Naive thymus-derived CD4-positive, alpha-beta T cell (primary cell): ENCODE measurements at regions of chr12 and their contacts with region 1.

Region 1: GRCh38 chr12:62123721-62124203 is 136.4 kb upstream of the USP15 start:
- DNase-seq: peak in 7 of 9 donors; percentile 8 to 49 (median 30)
- ATAC-seq: peak; percentile 77
- H3K4me3 ChIP-seq: no peak overlapping the region
- H3K4me3 Mint-ChIP-seq: no peak overlapping the region
- H3K27ac ChIP-seq: no peak overlapping the region
- H3K27ac Mint-ChIP-seq: peak overlapping the region in 1 of 9 donors; percentile 27
- H3K4me1 ChIP-seq: no peaks in the 10 kb centered on the region
- H3K4me1 Mint-ChIP-seq: peaks cover 0 to 6% (median 0%) of the 10 kb centered on the region in 7 donors
- H3K27me3 ChIP-seq: no peaks in the 10 kb centered on the region
- H3K27me3 Mint-ChIP-seq: peaks cover 0 to 17% (median 4%) of the 10 kb centered on the region in 5 donors

Region 2: DNA sequence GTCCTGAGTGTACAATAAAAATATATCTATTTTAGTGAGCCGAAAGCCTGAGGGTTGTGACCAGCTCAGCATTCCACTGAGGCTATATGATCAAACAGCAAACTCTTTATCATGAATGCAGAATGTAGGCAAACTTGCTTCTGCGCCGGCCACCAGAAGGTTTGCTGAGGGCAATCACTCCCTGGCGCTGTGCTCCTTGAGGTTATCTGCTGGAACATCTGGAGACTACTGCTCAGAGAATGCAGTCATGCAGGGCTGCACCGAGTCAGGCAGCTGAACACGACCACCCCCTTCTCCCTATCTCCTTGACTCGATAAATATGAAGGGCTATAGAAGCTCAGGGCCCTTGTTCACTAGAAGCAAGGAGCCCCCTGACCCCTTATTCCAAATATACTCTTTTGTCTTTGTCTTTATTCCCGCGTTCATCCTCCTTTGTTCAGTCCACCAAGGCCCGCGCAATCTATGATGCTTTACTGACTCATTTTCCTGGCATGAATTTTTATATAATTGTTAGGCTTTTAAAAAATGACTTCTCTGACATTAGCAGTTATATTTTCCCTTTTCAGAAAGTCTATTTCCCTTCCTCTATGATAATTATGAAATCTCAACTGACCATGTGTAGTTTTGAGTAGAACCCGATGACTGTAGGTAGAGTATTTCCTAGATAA is 1438.6 kb before region 1 on chr12:
- CTCF ChIA-PET with region 1: no interaction called
- POLR2A ChIA-PET with region 1: no interaction called
- intact Hi-C with region 1: loop called in 1 of 2 experiments (anchors 10 kb)
- DNase-seq: no peak
- ATAC-seq: no peak
- H3K4me3 ChIP-seq: no peak overlapping the region
- H3K4me3 Mint-ChIP-seq: no peak overlapping the region
- H3K27ac ChIP-seq: no peak overlapping the region
- H3K27ac Mint-ChIP-seq: no peak overlapping the region
- H3K4me1 ChIP-seq: no peaks in the 10 kb centered on the region
- H3K4me1 Mint-ChIP-seq: no peaks in the 10 kb centered on the region
- H3K27me3 ChIP-seq: no peaks in the 10 kb centered on the region
- H3K27me3 Mint-ChIP-seq: peaks cover 0 to 1% (median 0%) of the 10 kb centered on the region in 5 donors

Region 3: GRCh38 chr12:62135553-62136200 is 11.9 kb after region 1 on chr12:
- CTCF ChIA-PET with region 1: no interaction called
- POLR2A ChIA-PET with region 1: no interaction called
- intact Hi-C with region 1: no loop called
- DNase-seq: no peak
- ATAC-seq: no peak
- H3K4me3 ChIP-seq: no peak overlapping the region
- H3K4me3 Mint-ChIP-seq: no peak overlapping the region
- H3K27ac ChIP-seq: no peak overlapping the region
- H3K27ac Mint-ChIP-seq: no peak overlapping the region
- H3K4me1 ChIP-seq: no peaks in the 10 kb centered on the region
- H3K4me1 Mint-ChIP-seq: no peaks in the 10 kb centered on the region
- H3K27me3 ChIP-seq: no peaks in the 10 kb centered on the region
- H3K27me3 Mint-ChIP-seq: peaks cover 0 to 6% (median 0%) of the 10 kb centered on the region in 5 donors

Region 4: GRCh38 chr12:62273724-62274380 is 150.1 kb after region 1 on chr12:
- CTCF ChIA-PET with region 1: no interaction called
- POLR2A ChIA-PET with region 1: no interaction called
- intact Hi-C with region 1: no loop called
- DNase-seq: no peak
- ATAC-seq: no peak
- H3K4me3 ChIP-seq: no peak overlapping the region
- H3K4me3 Mint-ChIP-seq: peak overlapping the region; percentile 17 to 79 (median 54)
- H3K27ac ChIP-seq: peak overlapping the region; percentile 31
- H3K27ac Mint-ChIP-seq: peak overlapping the region in 7 of 9 donors; percentile 15 to 59 (median 51)
- H3K4me1 ChIP-seq: peaks cover 36 to 41% of the 10 kb centered on the region in 2 donors
- H3K4me1 Mint-ChIP-seq: peaks cover 62 to 89% (median 85%) of the 10 kb centered on the region in 7 donors
- H3K27me3 ChIP-seq: no peaks in the 10 kb centered on the region
- H3K27me3 Mint-ChIP-seq: no peaks in the 10 kb centered on the region

Region 5: GRCh38 chr12:62328296-62328921 is 204.6 kb after region 1 on chr12:
- CTCF ChIA-PET with region 1: no interaction called
- POLR2A ChIA-PET with region 1: no interaction called
- intact Hi-C with region 1: no loop called
- DNase-seq: no peak
- ATAC-seq: no peak
- H3K4me3 ChIP-seq: no peak overlapping the region
- H3K4me3 Mint-ChIP-seq: no peak overlapping the region
- H3K27ac ChIP-seq: no peak overlapping the region
- H3K27ac Mint-ChIP-seq: peak overlapping the region in 3 of 9 donors; percentile 1 to 56 (median 43)
- H3K4me1 ChIP-seq: no peaks in the 10 kb centered on the region
- H3K4me1 Mint-ChIP-seq: peaks cover 7 to 49% (median 29%) of the 10 kb centered on the region in 7 donors
- H3K27me3 ChIP-seq: no peaks in the 10 kb centered on the region
- H3K27me3 Mint-ChIP-seq: no peaks in the 10 kb centered on the region